Caco-2 (cell line): ENCODE measurements at regions of chr7 and their contacts with region 1.

Region 1: DNA sequence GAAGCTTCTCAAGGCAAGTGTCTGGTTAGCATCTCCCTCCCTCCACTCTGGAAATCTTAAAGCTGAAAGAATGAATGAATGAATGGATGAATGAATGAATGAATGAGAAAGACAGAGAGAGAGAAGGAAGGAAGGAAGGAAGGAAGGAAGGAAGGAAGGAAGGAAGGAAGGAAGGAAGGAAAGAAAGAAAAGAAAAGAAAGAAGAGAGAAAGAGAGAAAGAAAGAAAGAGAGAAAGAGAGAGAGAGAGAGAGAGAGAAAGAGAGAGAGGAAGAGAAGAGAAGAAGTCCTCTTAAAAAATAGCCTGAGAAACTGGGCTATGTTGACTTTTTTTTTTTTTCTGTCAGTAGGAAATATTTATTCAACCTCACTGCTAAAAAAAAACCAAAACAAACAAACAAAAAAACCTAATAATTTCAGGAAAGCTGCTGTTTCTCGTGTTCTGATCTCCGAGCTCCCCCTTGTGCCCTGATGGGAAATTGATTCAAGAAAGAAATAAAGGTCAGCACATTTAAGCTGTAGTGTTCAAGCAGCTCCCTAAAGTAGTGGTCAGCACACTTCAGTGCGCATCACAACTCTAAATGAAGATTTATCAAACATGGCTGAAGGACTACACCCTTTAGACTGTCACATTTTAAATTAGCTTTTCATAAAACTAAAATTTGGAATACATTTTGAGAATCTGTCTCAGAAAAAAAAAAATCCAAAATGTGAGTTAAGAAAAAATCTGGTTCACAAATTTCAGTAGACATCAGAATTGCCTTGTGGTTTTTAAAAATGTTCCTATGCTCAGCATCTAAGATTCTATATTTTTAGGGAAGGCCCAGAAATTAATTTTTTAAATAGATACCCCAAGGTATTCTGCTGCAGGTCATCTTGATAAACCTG is 154.3 kb downstream of the ELAPOR2 start:
- DNase-seq: peak in 1 of 2 experiments; percentile 55
- H3K4me3 ChIP-seq: no peak overlapping the region
- H3K4me3 Mint-ChIP-seq: no peak overlapping the region
- H3K27ac Mint-ChIP-seq: no peak overlapping the region
- H3K4me1 ChIP-seq: no peaks in the 10 kb centered on the region
- H3K4me1 Mint-ChIP-seq: no peaks in the 10 kb centered on the region
- H3K27me3 ChIP-seq: no peaks in the 10 kb centered on the region
- H3K27me3 Mint-ChIP-seq: peaks cover 3% of the 10 kb centered on the region
- CTCF ChIP-seq: peak; percentile 70 to 71

Region 2: DNA sequence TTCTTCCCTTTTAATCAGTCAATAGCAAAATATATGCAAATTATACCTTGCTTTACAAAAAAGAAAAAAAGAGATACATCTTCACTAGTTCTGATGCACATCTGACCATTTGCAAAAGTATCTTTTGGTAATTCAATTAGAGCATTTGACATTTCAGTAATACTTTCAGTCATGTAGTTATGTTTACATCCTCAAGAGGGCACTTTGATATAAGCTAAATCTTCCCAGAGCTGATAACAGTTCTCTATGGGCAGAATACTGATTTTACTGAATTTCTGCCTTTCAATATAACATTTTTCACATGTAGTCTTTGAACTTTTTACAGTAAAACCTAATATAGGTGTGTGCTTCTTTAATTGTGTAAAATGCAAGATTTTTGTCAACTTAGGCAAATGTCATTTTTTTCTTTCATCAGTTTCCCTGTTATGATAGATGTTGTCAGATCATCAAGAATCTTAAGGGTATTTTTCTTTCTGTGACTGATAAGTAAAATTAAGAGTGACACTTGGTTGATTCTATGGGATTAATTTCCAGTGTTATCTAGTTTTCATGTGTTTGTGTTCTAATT is 1014.9 kb before region 1 on chr7:
- CTCF ChIA-PET with region 1: interaction called, 4 read pairs
- POLR2A ChIA-PET with region 1: no interaction called
- intact Hi-C with region 1: loop called (anchors 1 kb)
- DNase-seq: no peak
- H3K4me3 ChIP-seq: no peak overlapping the region
- H3K4me3 Mint-ChIP-seq: no peak overlapping the region
- H3K27ac Mint-ChIP-seq: no peak overlapping the region
- H3K4me1 ChIP-seq: no peaks in the 10 kb centered on the region
- H3K4me1 Mint-ChIP-seq: no peaks in the 10 kb centered on the region
- H3K27me3 ChIP-seq: no peaks in the 10 kb centered on the region
- H3K27me3 Mint-ChIP-seq: peaks cover 3% of the 10 kb centered on the region
- CTCF ChIP-seq: peak; percentile 42 to 52

Region 3: GRCh38 chr7:86469680-86470295 is 435.4 kb before region 1 on chr7:
- CTCF ChIA-PET with region 1: no interaction called
- POLR2A ChIA-PET with region 1: no interaction called
- intact Hi-C with region 1: loop called (anchors 1 kb)
- DNase-seq: peak; percentile 66 to 78
- H3K4me3 ChIP-seq: no peak overlapping the region
- H3K4me3 Mint-ChIP-seq: no peak overlapping the region
- H3K27ac Mint-ChIP-seq: no peak overlapping the region
- H3K4me1 ChIP-seq: no peaks in the 10 kb centered on the region
- H3K4me1 Mint-ChIP-seq: no peaks in the 10 kb centered on the region
- H3K27me3 ChIP-seq: no peaks in the 10 kb centered on the region
- H3K27me3 Mint-ChIP-seq: peaks cover 4% of the 10 kb centered on the region
- CTCF ChIP-seq: peak; percentile 76 to 79

Region 4: DNA sequence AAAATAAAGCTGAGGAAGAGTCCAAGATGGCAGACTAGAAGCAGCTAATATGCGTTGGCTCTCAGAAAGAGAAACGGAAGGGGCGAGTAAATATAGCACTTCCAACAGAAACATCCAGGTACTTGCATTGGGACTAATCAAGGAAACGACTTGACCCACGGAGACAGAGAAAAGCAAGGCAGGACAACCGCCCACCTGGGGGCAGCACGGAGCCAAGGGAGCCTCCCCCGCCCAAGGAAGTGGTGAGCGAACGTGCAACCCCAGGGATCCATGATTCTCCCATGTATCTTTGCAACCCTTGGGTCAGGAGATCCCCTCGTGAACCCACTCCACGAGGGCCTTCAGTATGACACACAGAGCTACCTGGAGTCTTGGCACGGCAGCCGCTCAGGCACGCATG is 306.9 kb before region 1 on chr7:
- CTCF ChIA-PET with region 1: interaction called, 22 read pairs
- POLR2A ChIA-PET with region 1: no interaction called
- intact Hi-C with region 1: loop called (anchors 1 kb)
- DNase-seq: peak; percentile 52 to 53
- H3K4me3 ChIP-seq: no peak overlapping the region
- H3K4me3 Mint-ChIP-seq: no peak overlapping the region
- H3K27ac Mint-ChIP-seq: no peak overlapping the region
- H3K4me1 ChIP-seq: no peaks in the 10 kb centered on the region
- H3K4me1 Mint-ChIP-seq: no peaks in the 10 kb centered on the region
- H3K27me3 ChIP-seq: no peaks in the 10 kb centered on the region
- H3K27me3 Mint-ChIP-seq: peaks cover 6% of the 10 kb centered on the region
- CTCF ChIP-seq: peak; percentile 34 to 37

Region 5: GRCh38 chr7:86667732-86668131 is 237.5 kb before region 1 on chr7:
- CTCF ChIA-PET with region 1: interaction called, 8 read pairs
- POLR2A ChIA-PET with region 1: no interaction called
- intact Hi-C with region 1: loop called (anchors 2 kb)
- DNase-seq: no peak
- H3K4me3 ChIP-seq: no peak overlapping the region
- H3K4me3 Mint-ChIP-seq: no peak overlapping the region
- H3K27ac Mint-ChIP-seq: no peak overlapping the region
- H3K4me1 ChIP-seq: 0 out of 2 replicates have a peak, but pooled peaks cover 3% of the 10 kb centered on the region
- H3K4me1 Mint-ChIP-seq: no peaks in the 10 kb centered on the region
- H3K27me3 ChIP-seq: no peaks in the 10 kb centered on the region
- H3K27me3 Mint-ChIP-seq: peaks cover 3% of the 10 kb centered on the region
- CTCF ChIP-seq: peak in 1 of 2 experiments; percentile 5

Region 6: DNA sequence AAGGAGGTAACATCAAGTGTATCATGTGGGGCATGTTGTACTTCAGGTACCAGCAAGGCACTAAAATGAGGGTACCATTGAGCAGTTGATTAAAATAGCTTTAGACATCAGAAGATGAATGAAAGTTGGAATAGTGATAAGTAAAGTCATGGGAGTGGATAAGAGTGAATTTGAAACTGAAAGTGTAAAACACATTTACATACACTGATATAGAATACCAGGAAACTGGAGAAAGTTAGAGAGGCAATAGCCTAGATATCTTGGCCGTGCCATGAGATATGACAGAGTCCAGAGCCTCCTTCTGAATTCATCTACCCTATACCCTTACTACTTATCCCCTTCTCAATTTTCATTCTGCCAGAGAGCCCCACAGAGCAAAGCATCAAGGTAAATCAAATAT is 184.9 kb before region 1 on chr7:
- CTCF ChIA-PET with region 1: no interaction called
- POLR2A ChIA-PET with region 1: no interaction called
- intact Hi-C with region 1: no loop called
- DNase-seq: no peak
- H3K4me3 ChIP-seq: no peak overlapping the region
- H3K4me3 Mint-ChIP-seq: no peak overlapping the region
- H3K27ac Mint-ChIP-seq: no peak overlapping the region
- H3K4me1 ChIP-seq: no peaks in the 10 kb centered on the region
- H3K4me1 Mint-ChIP-seq: no peaks in the 10 kb centered on the region
- H3K27me3 ChIP-seq: no peaks in the 10 kb centered on the region
- H3K27me3 Mint-ChIP-seq: no peaks in the 10 kb centered on the region
- CTCF ChIP-seq: no peak

Region 7: GRCh38 chr7:86814661-86815379 is 90.4 kb before region 1 on chr7:
- CTCF ChIA-PET with region 1: interaction called, 12 read pairs
- POLR2A ChIA-PET with region 1: no interaction called
- intact Hi-C with region 1: loop called (anchors 2 kb)
- DNase-seq: peak in 1 of 2 experiments; percentile 32
- H3K4me3 ChIP-seq: no peak overlapping the region
- H3K4me3 Mint-ChIP-seq: no peak overlapping the region
- H3K27ac Mint-ChIP-seq: no peak overlapping the region
- H3K4me1 ChIP-seq: no peaks in the 10 kb centered on the region
- H3K4me1 Mint-ChIP-seq: no peaks in the 10 kb centered on the region
- H3K27me3 ChIP-seq: no peaks in the 10 kb centered on the region
- H3K27me3 Mint-ChIP-seq: no peaks in the 10 kb centered on the region
- CTCF ChIP-seq: peak; percentile 51 to 61

Region 8: GRCh38 chr7:86833360-86833759 is 71.8 kb before region 1 on chr7:
- CTCF ChIA-PET with region 1: no interaction called
- POLR2A ChIA-PET with region 1: no interaction called
- intact Hi-C with region 1: no loop called
- DNase-seq: no peak
- H3K4me3 ChIP-seq: no peak overlapping the region
- H3K4me3 Mint-ChIP-seq: no peak overlapping the region
- H3K27ac Mint-ChIP-seq: no peak overlapping the region
- H3K4me1 ChIP-seq: peaks cover 15% of the 10 kb centered on the region
- H3K4me1 Mint-ChIP-seq: peaks cover 13% of the 10 kb centered on the region
- H3K27me3 ChIP-seq: no peaks in the 10 kb centered on the region
- H3K27me3 Mint-ChIP-seq: no peaks in the 10 kb centered on the region
- CTCF ChIP-seq: no peak

Region 9: GRCh38 chr7:86846494-86847190 is 58.5 kb before region 1 on chr7:
- CTCF ChIA-PET with region 1: no interaction called
- POLR2A ChIA-PET with region 1: no interaction called
- intact Hi-C with region 1: loop called (anchors 2 kb)
- DNase-seq: peak; percentile 83 to 88
- H3K4me3 ChIP-seq: no peak overlapping the region
- H3K4me3 Mint-ChIP-seq: peak overlapping the region; percentile 59
- H3K27ac Mint-ChIP-seq: peak overlapping the region; percentile 80
- H3K4me1 ChIP-seq: peaks cover 58% of the 10 kb centered on the region
- H3K4me1 Mint-ChIP-seq: peaks cover 44% of the 10 kb centered on the region
- H3K27me3 ChIP-seq: no peaks in the 10 kb centered on the region
- H3K27me3 Mint-ChIP-seq: no peaks in the 10 kb centered on the region
- CTCF ChIP-seq: no peak

Region 10: GRCh38 chr7:86889501-86889900 is 15.7 kb before region 1 on chr7:
- CTCF ChIA-PET with region 1: no interaction called
- POLR2A ChIA-PET with region 1: no interaction called
- intact Hi-C with region 1: no loop called
- DNase-seq: no peak
- H3K4me3 ChIP-seq: no peak overlapping the region
- H3K4me3 Mint-ChIP-seq: no peak overlapping the region
- H3K27ac Mint-ChIP-seq: no peak overlapping the region
- H3K4me1 ChIP-seq: no peaks in the 10 kb centered on the region
- H3K4me1 Mint-ChIP-seq: no peaks in the 10 kb centered on the region
- H3K27me3 ChIP-seq: no peaks in the 10 kb centered on the region
- H3K27me3 Mint-ChIP-seq: no peaks in the 10 kb centered on the region
- CTCF ChIP-seq: no peak